ENCODE measurements at regions of chrX and their contacts with region 1.

Region 1: GRCh38 chrX:12791257-12792228 is at the start of gene PRPS2:
- DNase-seq: peak; percentile 50
- H3K4me3 Mint-ChIP-seq: peak within 1 kb of the TSS; percentile 75
- H3K27ac Mint-ChIP-seq: peak within 1 kb of the TSS; percentile 20
- H3K4me1 Mint-ChIP-seq: peaks cover 4% of the 10 kb centered on the region
- H3K27me3 Mint-ChIP-seq: peaks cover 17% of the 10 kb centered on the region
- CTCF ChIP-seq: no peak
- total RNA-seq, gene PRPS2: 27.3 and 45.1 TPM in 2 replicates

Region 2: DNA sequence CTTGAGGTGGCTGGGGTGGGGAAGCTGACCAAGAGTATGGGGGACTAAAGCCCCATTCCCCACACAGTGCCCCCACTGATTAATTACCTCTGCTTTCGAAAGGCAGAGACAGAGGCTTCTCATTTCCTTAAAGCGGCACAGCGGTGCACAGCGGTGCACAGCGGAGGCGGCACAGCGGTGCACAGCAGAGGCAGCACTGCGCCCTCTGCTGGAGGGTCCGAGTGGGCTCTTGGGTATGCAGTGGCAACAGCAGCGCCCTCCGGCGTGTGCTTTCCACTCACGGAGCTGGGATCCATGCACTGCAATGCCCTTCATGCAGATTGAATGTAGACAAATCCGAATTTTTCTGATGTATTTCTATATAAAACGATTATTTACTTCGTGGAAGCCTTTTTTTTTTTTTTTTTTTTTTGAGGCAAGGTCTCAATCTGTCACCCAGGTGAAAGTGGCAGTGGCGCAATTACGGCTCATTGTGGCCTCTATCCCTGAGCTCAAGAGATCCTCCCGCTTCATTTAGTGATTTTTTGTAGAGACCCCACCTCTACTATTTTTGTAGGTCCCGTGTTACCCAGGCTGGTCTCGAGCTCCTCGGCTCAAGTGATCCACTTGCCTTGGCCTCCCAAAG is 20.0 kb before region 1 on chrX:
- CTCF ChIA-PET with region 1: interaction called, 10 read pairs
- POLR2A ChIA-PET with region 1: no interaction called
- intact Hi-C with region 1: no loop called
- DNase-seq: no peak
- H3K4me3 Mint-ChIP-seq: no peak overlapping the region
- H3K27ac Mint-ChIP-seq: no peak overlapping the region
- H3K4me1 Mint-ChIP-seq: no peaks in the 10 kb centered on the region
- H3K27me3 Mint-ChIP-seq: peaks cover 66% of the 10 kb centered on the region
- CTCF ChIP-seq: peak; percentile 26